Activated CD4-positive, alpha-beta memory T cell treated with anti-CD3 and anti-CD28 coated beads, Interleukin-2, amount 10 ng/mL, durations not matched to agents 7 days and 5 days (primary cell): ENCODE measurements at regions of chr2 and their contacts with region 1.

Region 1: GRCh38 chr2:9770308-9771100 is 72.8 kb upstream of the TAF1B start:
- DNase-seq: peak; percentile 73
- H3K4me3 Mint-ChIP-seq: no peak overlapping the region
- H3K27ac Mint-ChIP-seq: no peak overlapping the region
- H3K4me1 Mint-ChIP-seq: peaks cover 21% of the 10 kb centered on the region
- H3K27me3 Mint-ChIP-seq: no peaks in the 10 kb centered on the region

Region 2: GRCh38 chr2:9618410-9618809 is 152.1 kb before region 1 on chr2:
- CTCF ChIA-PET with region 1: interaction called, 10 read pairs
- POLR2A ChIA-PET with region 1: no interaction called
- DNase-seq: peak; percentile 52
- H3K4me3 Mint-ChIP-seq: peak overlapping the region; percentile 50
- H3K27ac Mint-ChIP-seq: peak overlapping the region; percentile 81
- H3K4me1 Mint-ChIP-seq: peaks cover 89% of the 10 kb centered on the region
- H3K27me3 Mint-ChIP-seq: no peaks in the 10 kb centered on the region

Region 3: GRCh38 chr2:9739531-9739964 is 31.0 kb before region 1 on chr2:
- CTCF ChIA-PET with region 1: interaction called, 16 read pairs
- POLR2A ChIA-PET with region 1: interaction called, 3 read pairs
- DNase-seq: peak; percentile 77
- H3K4me3 Mint-ChIP-seq: peak overlapping the region; percentile 72
- H3K27ac Mint-ChIP-seq: peak overlapping the region; percentile 93
- H3K4me1 Mint-ChIP-seq: peaks cover 61% of the 10 kb centered on the region
- H3K27me3 Mint-ChIP-seq: peaks cover 2% of the 10 kb centered on the region

Region 4: DNA sequence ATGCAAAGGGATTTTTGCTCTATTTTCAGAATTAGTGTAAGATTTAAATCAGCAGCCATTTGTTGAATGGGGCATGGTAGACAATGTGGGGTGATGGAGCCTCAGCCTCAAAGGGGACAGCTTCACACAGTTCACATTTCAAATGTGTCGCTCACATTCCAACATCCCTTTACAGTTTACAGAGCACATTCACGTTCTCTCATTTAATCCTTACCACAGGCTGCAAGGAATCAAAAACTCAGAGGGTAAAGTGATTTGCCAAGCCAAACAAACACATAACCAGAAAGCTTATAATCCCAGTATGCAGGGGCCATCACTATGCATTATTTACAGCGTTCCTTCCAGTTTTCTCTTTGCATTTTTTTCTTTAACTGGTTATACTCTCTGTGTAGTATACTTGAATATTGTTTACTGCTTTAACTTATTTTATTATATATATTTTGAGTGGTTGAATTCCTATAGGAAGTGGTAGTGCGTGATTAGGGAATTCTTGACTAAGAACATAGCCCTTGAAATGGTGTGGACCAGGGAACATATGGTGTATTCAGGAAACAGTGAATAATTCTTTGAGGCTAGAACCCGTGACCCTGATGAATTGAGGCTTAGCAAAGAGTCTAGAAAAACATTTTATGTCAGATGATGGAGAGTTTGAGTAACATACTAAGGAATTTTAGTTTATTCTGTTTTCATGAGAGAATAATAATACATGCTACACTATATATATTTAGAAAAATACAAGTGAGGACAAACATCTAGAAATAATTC is 54.6 kb after region 1 on chr2:
- CTCF ChIA-PET with region 1: no interaction called
- POLR2A ChIA-PET with region 1: no interaction called
- DNase-seq: no peak
- H3K4me3 Mint-ChIP-seq: no peak overlapping the region
- H3K27ac Mint-ChIP-seq: no peak overlapping the region
- H3K4me1 Mint-ChIP-seq: peaks cover 11% of the 10 kb centered on the region
- H3K27me3 Mint-ChIP-seq: peaks cover 16% of the 10 kb centered on the region

Region 5: GRCh38 chr2:10043906-10044601 is 273.6 kb after region 1 on chr2:
- CTCF ChIA-PET with region 1: interaction called, 10 read pairs
- POLR2A ChIA-PET with region 1: no interaction called
- DNase-seq: peak; percentile 95
- H3K4me3 Mint-ChIP-seq: peak overlapping the region; percentile 80
- H3K27ac Mint-ChIP-seq: peak overlapping the region; percentile 81
- H3K4me1 Mint-ChIP-seq: peaks cover 44% of the 10 kb centered on the region
- H3K27me3 Mint-ChIP-seq: peaks cover 26% of the 10 kb centered on the region